Activated B cell treated with CpG ODN at 0.5 μM for 24 hours (primary cell): ENCODE measurements at regions of chr5 and their contacts with region 1.

Region 1: DNA sequence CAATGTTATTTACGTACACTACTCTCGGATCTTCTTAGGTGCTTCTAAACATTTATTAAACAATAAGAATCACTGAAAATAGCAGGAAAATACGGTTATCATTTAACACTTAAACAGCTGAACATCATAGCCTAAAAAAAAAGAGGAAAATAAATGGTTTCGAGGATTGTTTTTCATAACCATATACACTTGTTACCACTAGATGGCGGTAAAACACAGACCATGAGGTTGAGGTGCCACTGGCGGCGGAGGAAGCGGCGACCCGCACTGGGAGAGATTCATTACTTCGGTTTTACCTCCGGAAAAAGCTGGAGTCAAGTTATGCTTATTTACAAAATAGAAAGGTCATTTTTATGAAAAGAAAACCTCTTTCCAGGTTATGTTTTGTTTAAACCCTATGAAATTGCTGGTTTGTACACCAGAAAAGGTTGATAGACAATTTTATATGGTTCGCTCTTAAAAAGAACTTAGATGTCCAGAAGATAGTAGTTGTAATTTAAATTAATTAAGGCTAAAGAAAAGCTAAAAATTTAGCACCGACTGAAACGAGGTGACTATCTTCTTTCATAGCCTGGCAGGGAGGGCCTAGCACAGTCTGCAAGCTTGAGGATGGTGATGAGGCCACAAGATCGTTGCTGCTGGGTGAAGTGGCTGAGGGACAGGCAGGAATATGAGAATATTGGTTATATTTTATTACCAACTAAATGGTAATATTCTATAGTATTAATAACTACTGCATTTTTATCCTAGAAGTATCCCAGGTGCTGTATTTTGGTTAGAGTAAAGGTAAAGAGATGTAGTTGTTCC is 605.7 kb downstream of the RAB3C start:
- DNase-seq: peak; percentile 21
- ATAC-seq: peak; percentile 54
- H3K4me3 Mint-ChIP-seq: peak overlapping the region; percentile 48
- H3K27ac Mint-ChIP-seq: no peak overlapping the region
- H3K4me1 Mint-ChIP-seq: peaks cover 6% of the 10 kb centered on the region
- H3K27me3 Mint-ChIP-seq: peaks cover 3% of the 10 kb centered on the region
- CTCF ChIP-seq: peak; percentile 94

Region 2: DNA sequence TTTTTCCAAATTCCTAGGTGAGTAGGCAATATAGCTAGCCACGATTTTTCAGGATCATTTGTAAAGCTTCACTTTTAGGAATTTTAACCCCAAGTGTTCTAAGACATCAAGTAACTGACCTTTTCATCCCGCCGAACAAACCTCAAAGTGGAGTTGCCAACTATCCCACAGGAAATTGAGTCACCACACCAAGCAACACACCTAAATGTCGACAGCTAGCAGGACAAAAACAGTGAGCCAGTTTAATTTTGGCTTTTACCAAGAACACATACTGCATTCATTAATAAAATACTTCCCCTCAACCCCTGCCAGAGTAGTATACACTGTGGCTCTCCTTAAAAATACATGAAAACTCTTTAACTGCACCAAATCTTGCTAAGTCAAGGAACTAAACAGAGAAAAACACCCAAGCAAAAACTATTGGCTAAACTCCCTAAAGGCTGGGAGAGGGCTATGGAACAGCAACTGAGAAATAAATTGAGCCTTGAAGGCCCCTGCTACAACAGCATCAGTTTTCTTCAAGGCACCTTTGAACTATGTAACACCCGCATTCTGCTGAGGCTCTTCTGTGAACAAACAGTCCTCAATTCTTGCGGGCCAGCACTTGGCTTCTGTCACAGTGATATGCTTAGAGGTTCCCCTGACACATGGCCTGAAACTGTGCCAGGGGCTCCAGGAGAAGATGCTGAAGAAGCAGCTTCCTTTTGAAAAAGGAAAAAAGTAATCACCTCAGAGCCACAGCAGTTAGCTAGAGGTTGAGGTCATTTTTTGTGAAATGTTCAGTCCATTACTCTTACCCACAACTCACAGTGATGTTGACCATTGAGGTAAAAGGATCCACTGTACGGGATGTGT is 146.2 kb before region 1 on chr5:
- CTCF ChIA-PET with region 1: no interaction called
- POLR2A ChIA-PET with region 1: no interaction called
- intact Hi-C with region 1: no loop called
- DNase-seq: no peak
- ATAC-seq: no peak
- H3K4me3 Mint-ChIP-seq: no peak overlapping the region
- H3K27ac Mint-ChIP-seq: no peak overlapping the region
- H3K4me1 Mint-ChIP-seq: peaks cover 29% of the 10 kb centered on the region
- H3K27me3 Mint-ChIP-seq: peaks cover 14% of the 10 kb centered on the region
- CTCF ChIP-seq: no peak

Region 3: DNA sequence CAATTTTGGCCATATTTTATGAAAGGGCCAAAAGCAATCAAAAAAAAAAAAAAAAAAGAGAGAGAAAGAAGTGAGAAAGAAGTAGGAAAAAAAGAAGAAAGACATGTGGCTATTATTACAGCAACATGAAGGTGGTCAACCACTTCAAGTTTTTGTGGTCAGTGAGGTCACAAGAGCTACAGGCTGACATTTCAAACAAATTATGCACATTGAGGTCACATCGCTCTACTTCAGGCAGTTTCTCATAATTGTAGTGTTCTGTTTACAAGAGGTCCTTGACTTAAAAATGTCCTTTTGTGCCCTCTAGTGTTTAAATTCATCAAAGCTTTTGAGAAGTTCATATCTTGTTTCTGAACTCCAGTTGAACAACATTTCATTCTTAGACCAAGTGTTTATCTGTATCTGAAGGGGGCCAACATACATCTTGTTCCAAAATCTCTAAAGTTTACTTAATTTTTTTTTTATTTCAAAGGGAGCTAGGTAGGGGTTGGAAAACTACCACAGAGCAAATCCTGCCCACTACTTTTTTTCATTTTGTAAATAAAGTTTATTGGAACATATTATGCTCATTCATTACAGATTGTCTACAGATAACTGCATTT is 191.8 kb after region 1 on chr5:
- CTCF ChIA-PET with region 1: interaction called, 75 read pairs
- POLR2A ChIA-PET with region 1: no interaction called
- intact Hi-C with region 1: loop called (anchors 1 kb)
- DNase-seq: no peak
- ATAC-seq: peak; percentile 52
- H3K4me3 Mint-ChIP-seq: no peak overlapping the region
- H3K27ac Mint-ChIP-seq: no peak overlapping the region
- H3K4me1 Mint-ChIP-seq: peaks cover 4% of the 10 kb centered on the region
- H3K27me3 Mint-ChIP-seq: no peaks in the 10 kb centered on the region
- CTCF ChIP-seq: no peak

Region 4: GRCh38 chr5:59506285-59506877 is 317.8 kb after region 1 on chr5:
- CTCF ChIA-PET with region 1: no interaction called
- POLR2A ChIA-PET with region 1: no interaction called
- intact Hi-C with region 1: loop called (anchors 2 kb)
- DNase-seq: no peak
- ATAC-seq: no peak
- H3K4me3 Mint-ChIP-seq: no peak overlapping the region
- H3K27ac Mint-ChIP-seq: no peak overlapping the region
- H3K4me1 Mint-ChIP-seq: no peaks in the 10 kb centered on the region
- H3K27me3 Mint-ChIP-seq: no peaks in the 10 kb centered on the region
- CTCF ChIP-seq: no peak

Region 5: GRCh38 chr5:59724482-59725391 is 536.1 kb after region 1 on chr5:
- CTCF ChIA-PET with region 1: interaction called, 6 read pairs
- POLR2A ChIA-PET with region 1: no interaction called
- intact Hi-C with region 1: loop called (anchors 2 kb)
- DNase-seq: no peak
- ATAC-seq: peak; percentile 75
- H3K4me3 Mint-ChIP-seq: no peak overlapping the region
- H3K27ac Mint-ChIP-seq: no peak overlapping the region
- H3K4me1 Mint-ChIP-seq: peaks cover 13% of the 10 kb centered on the region
- H3K27me3 Mint-ChIP-seq: no peaks in the 10 kb centered on the region
- CTCF ChIP-seq: peak; percentile 38